ENCODE measurements at regions of chr20 and their contacts with region 1.

Region 1: GRCh38 chr20:46013826-46014516 is 5.3 kb downstream of the MMP9 start:
- DNase-seq: peak; percentile 55 to 74 (median 56)
- H3K4me3 ChIP-seq: peak overlapping the region in 1 of 3 experiments; percentile 50
- H3K4me3 Mint-ChIP-seq: peak overlapping the region; percentile 61 to 72
- H3K27ac ChIP-seq: no peak overlapping the region
- H3K27ac Mint-ChIP-seq: peak overlapping the region in 3 of 7 donors; percentile 25 to 79 (median 26)
- H3K4me1 ChIP-seq: peaks cover 50 to 55% of the 10 kb centered on the region in 2 donors
- H3K4me1 Mint-ChIP-seq: peaks cover 48% of the 10 kb centered on the region
- H3K27me3 ChIP-seq: peaks cover 11 to 71% of the 10 kb centered on the region in 2 donors
- H3K27me3 Mint-ChIP-seq: peaks cover 67 to 83% (median 75%) of the 10 kb centered on the region in 3 donors
- CTCF ChIP-seq: peak; percentile 99

Region 2: GRCh38 chr20:45518282-45518681 is 495.7 kb before region 1 on chr20:
- intact Hi-C with region 1: no loop called
- DNase-seq: no peak
- H3K4me3 ChIP-seq: no peak overlapping the region
- H3K4me3 Mint-ChIP-seq: no peak overlapping the region
- H3K27ac ChIP-seq: no peak overlapping the region
- H3K27ac Mint-ChIP-seq: no peak overlapping the region
- H3K4me1 ChIP-seq: no peaks in the 10 kb centered on the region
- H3K4me1 Mint-ChIP-seq: no peaks in the 10 kb centered on the region
- H3K27me3 ChIP-seq: peaks cover 7 to 15% of the 10 kb centered on the region in 2 donors
- H3K27me3 Mint-ChIP-seq: peaks cover 3 to 19% (median 10%) of the 10 kb centered on the region in 3 donors
- CTCF ChIP-seq: no peak

Region 3: DNA sequence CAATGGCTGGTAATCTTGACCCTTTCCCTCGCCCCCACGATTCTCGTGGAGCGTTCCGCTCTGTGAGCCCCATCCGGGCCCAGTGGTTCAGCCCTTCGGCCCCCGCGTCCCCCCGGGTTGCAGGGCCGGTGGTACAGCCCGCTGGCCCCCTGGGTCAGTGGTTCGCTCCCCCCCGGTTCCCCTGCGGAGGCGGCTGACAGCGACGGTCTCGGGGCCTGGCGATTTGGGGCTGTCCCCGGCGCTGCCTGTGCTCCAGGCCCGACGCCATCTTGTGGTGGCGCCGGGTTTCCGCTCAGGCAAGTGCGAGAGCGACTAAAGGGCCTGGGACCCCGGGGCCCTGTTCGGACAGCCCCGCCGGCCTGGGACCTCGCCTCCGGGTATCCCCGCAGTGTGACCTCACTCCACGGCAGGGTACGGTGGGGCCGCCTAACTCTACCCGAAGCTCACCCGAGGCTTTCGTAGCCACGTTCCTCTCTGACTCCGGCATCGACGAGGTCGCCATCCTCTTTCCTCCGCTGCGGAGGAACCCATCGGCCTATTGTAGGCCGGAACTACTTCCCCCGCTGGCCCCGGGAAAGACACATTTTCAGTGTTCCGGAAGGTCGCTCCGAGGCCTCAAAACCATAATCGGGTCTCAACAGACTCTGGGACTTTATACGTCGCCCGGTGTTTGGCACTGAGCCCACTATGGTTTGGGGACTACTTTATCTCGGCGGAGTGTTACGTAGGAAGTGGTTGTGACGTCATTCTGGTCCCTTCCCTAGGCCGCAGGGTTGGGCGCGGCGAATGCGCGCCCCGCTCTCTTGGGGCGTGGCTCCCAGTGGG is 42.1 kb before region 1 on chr20 and contains the start of gene ZNF335:
- intact Hi-C with region 1: loop called in 1 of 2 experiments (anchors 5 kb)
- DNase-seq: peak; percentile 86 to 98 (median 94)
- H3K4me3 ChIP-seq: peak within 1 kb of the TSS; percentile 90 to 96 (median 96)
- H3K4me3 Mint-ChIP-seq: peak within 1 kb of the TSS; percentile 83 to 88
- H3K27ac ChIP-seq: peak within 1 kb of the TSS; percentile 97 to 99
- H3K27ac Mint-ChIP-seq: peak within 1 kb of the TSS; percentile 90 to 100 (median 100)
- H3K4me1 ChIP-seq: peaks cover 45 to 47% of the 10 kb centered on the region in 2 donors
- H3K4me1 Mint-ChIP-seq: peaks cover 37% of the 10 kb centered on the region
- H3K27me3 ChIP-seq: no peaks in the 10 kb centered on the region
- H3K27me3 Mint-ChIP-seq: peaks cover 0 to 2% (median 0%) of the 10 kb centered on the region in 3 donors
- CTCF ChIP-seq: peak; percentile 22
- polyA plus RNA-seq, gene ZNF335: 2.7 to 39.6 (median 3.1) TPM

Region 4: DNA sequence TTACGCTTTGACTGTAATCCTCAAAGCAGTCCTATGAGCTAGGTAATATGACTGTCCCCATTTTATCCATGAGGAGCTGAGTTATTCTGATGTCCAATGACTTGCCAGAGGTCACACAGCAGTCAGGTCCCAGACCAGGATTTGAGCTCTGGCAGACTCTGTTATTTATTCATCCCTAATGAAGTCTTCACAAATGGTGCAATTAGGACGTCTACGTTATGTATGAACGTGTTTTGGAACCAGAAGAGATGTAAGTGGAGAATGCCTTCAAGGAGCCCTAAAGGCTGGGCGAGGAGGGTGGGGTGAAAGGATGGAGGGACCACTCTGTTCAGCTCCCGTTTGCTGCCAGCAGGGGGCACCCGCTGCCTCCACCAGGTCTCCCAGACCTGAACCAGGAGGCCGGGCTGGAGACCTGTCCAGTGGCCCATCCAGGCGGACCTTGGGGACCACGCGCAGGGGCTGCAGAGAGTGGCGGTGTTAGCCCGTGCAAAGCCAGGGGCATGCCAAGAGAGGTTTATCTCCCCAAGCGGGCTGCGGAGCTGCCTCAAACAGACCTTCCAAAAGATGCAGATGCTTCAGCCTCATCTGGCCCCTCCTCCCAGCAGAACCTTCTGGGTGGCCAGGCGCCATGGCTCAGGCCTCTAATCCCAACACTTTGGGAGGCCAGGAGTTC is 26.7 kb before region 1 on chr20:
- intact Hi-C with region 1: loop called (anchors 1 kb)
- DNase-seq: peak; percentile 76 to 82 (median 81)
- H3K4me3 ChIP-seq: no peak overlapping the region
- H3K4me3 Mint-ChIP-seq: no peak overlapping the region
- H3K27ac ChIP-seq: no peak overlapping the region
- H3K27ac Mint-ChIP-seq: peak overlapping the region in 1 of 7 donors; percentile 31
- H3K4me1 ChIP-seq: peaks cover 10 to 11% of the 10 kb centered on the region in 2 donors
- H3K4me1 Mint-ChIP-seq: peaks cover 9% of the 10 kb centered on the region
- H3K27me3 ChIP-seq: peaks cover 7 to 34% of the 10 kb centered on the region in 2 donors
- H3K27me3 Mint-ChIP-seq: peaks cover 31 to 54% (median 35%) of the 10 kb centered on the region in 3 donors
- CTCF ChIP-seq: peak; percentile 96

Region 5: DNA sequence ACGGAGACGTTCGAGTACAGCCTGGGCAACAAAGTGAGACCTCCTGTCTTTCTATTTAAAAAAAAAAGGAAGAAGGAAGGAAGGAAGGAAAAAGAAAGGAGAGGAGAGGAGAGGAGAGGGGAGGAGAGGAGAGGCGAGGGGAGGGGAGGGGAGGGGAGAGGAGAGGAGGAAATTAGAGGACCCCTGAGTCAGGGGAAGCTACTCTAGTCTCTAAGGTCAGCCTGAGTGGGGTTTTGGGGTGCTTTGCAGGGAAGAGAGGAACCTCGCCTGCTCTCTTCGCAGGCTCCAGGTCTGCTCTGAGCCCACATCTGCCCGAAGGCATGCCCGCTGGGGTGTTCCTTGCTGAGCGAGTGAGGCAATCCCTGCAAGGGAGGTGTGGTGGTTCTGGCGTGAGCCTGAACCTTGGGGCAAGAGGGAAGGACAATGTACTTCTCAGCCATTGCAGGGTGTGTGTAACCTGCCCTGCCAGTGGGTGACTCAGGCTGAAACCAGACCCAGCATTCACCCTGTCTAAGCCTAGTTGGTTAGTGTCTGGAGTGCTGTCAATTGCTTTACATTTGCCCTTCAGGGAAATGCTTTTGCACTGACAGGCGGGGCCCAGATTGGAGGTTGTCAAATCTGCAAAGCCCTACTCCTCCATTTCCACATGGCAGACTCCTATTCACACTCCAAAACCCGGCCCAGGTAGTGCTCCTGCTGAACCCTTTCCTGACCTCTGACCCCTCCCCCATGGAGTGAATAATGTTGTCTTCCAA is 20.6 kb before region 1 on chr20:
- intact Hi-C with region 1: loop called in 1 of 2 experiments (anchors 2 kb)
- DNase-seq: peak; percentile 84 to 88 (median 88)
- H3K4me3 ChIP-seq: no peak overlapping the region
- H3K4me3 Mint-ChIP-seq: peak overlapping the region in 1 of 2 donors; percentile 71
- H3K27ac ChIP-seq: peak overlapping the region in 1 of 2 donors; percentile 45
- H3K27ac Mint-ChIP-seq: peak overlapping the region; percentile 31 to 89 (median 75)
- H3K4me1 ChIP-seq: peaks cover 46 to 61% of the 10 kb centered on the region in 2 donors
- H3K4me1 Mint-ChIP-seq: peaks cover 44% of the 10 kb centered on the region
- H3K27me3 ChIP-seq: peaks cover 9 to 39% of the 10 kb centered on the region in 2 donors
- H3K27me3 Mint-ChIP-seq: peaks cover 32 to 60% (median 51%) of the 10 kb centered on the region in 3 donors
- CTCF ChIP-seq: no peak

Region 6: GRCh38 chr20:46089417-46090388 is 75.7 kb after region 1 on chr20 and contains the start of gene NCOA5:
- intact Hi-C with region 1: loop called in 1 of 2 experiments (anchors 5 kb)
- DNase-seq: peak; percentile 90 to 94 (median 92)
- H3K4me3 ChIP-seq: peak within 1 kb of the TSS; percentile 51 to 88 (median 75)
- H3K4me3 Mint-ChIP-seq: peak within 1 kb of the TSS; percentile 85 to 94
- H3K27ac ChIP-seq: peak within 1 kb of the TSS; percentile 58 to 92
- H3K27ac Mint-ChIP-seq: peak within 1 kb of the TSS; percentile 85 to 97 (median 93)
- H3K4me1 ChIP-seq: peaks cover 25 to 46% of the 10 kb centered on the region in 2 donors
- H3K4me1 Mint-ChIP-seq: peaks cover 44% of the 10 kb centered on the region
- H3K27me3 ChIP-seq: no peaks in the 10 kb centered on the region
- H3K27me3 Mint-ChIP-seq: no peaks in the 10 kb centered on the region
- CTCF ChIP-seq: no peak
- polyA plus RNA-seq, gene NCOA5: 4.5 to 10.2 (median 6.0) TPM

Region 7: DNA sequence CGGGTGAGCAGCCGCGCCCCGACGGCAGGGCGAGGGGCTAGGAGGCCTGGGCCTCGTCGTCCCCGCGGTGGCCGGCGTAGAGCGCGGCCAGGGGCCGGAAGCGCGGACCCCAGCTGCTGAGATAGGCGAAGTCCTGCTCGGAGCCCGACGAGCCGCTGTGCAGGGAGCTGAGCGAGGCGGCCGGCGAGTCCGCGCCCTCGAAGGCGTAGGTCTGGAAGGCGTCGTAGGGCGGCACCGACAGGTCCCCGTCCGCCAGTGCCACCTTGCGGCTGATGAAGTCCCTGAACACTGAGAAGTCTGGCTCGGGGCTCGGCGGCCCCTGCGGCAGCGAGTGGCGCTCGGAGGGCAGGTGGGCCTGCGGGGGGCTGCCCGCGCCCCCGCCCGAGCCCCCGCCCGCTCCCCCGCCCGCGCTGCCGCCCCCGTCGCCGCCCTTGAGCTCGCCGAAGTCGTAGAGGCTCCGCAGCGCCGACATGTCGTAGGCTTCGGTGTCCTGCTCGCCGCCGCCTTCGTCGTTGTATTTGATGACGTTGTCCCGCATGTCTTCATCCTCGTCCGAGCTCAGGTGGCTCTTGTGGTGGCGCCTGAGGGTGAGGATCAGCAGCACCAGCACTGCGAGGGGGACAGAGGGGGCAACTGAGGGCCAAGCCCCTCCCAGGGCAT is 160.6 kb after region 1 on chr20:
- intact Hi-C with region 1: loop called in 1 of 2 experiments (anchors 10 kb)
- DNase-seq: peak; percentile 63 to 74 (median 72)
- H3K4me3 ChIP-seq: no peak overlapping the region
- H3K4me3 Mint-ChIP-seq: peak overlapping the region; percentile 50 to 74
- H3K27ac ChIP-seq: no peak overlapping the region
- H3K27ac Mint-ChIP-seq: no peak overlapping the region
- H3K4me1 ChIP-seq: no peaks in the 10 kb centered on the region
- H3K4me1 Mint-ChIP-seq: peaks cover 7% of the 10 kb centered on the region
- H3K27me3 ChIP-seq: peaks cover 28 to 45% of the 10 kb centered on the region in 2 donors
- H3K27me3 Mint-ChIP-seq: peaks cover 44 to 73% (median 68%) of the 10 kb centered on the region in 3 donors
- CTCF ChIP-seq: peak; percentile 85